PC-9 (cell line): ENCODE measurements at regions of chr15 and their contacts with region 1.

Region 1: DNA sequence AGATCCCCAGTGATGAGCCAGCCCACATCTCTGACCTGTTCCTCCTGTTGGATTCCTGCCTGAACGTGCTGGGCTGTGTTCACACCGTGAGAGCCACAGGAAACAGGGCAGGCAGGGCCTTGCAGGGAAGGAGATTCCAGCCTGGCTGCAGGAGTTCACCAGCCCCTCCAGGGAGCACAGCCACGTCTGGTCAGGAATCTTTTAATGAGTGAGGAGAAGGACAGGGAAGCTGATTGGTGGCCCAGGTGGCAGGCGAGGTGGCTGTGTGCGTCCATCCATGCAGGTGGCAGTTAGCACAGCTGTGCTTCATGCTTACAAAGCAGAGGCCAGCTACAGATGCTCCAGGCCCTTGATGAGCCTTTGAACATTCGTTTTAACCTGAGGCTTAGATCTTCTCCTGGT is 10.5 kb downstream of the LRRK1 start:
- DNase-seq: no peak
- H3K4me3 ChIP-seq: no peak overlapping the region
- H3K27ac ChIP-seq: no peak overlapping the region
- H3K4me1 ChIP-seq: 0 out of 2 replicates have a peak, but pooled peaks cover 13% of the 10 kb centered on the region
- H3K27me3 ChIP-seq: no peaks in the 10 kb centered on the region
- CTCF ChIP-seq: no peak

Region 2: DNA sequence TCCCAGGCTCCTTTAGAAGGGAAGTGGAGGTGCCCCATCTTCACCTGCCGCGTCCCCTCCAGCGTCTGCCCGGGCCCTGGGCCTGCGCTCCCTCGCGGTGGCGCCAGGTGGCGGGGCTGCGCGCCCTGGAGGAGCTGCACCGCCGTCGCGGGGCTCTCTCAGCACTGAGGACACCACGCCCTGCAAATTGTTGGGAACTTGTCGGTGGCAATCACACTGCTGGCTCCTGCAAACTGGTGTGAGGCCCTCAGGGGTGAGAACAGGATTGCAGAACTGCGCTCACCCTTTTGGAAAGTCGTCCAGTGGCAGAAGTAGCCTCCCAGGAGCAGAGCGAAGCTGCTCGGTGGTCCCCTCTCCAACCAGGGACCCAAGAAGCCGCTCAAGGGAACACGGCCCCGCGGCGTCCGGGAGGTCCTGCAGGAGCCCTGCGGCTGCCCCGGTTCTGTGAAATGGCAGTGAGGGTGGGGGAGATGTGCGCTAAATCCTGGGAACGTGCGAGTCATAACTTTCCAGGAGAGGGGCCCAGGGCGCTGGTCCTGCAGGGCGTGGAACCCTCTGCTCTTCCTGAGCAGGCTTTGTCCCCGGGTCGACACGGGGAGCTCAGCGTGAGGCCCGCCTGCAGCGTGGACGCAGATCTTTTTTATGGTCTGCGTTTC is 11.5 kb before region 1 on chr15:
- CTCF ChIA-PET with region 1: interaction called, 3 read pairs
- POLR2A ChIA-PET with region 1: no interaction called
- intact Hi-C with region 1: loop called (anchors 1 kb)
- DNase-seq: peak; percentile 80 to 89
- H3K4me3 ChIP-seq: peak overlapping the region; percentile 72
- H3K27ac ChIP-seq: no peak overlapping the region
- H3K4me1 ChIP-seq: no peaks in the 10 kb centered on the region
- H3K27me3 ChIP-seq: no peaks in the 10 kb centered on the region
- CTCF ChIP-seq: peak; percentile 85

Region 3: DNA sequence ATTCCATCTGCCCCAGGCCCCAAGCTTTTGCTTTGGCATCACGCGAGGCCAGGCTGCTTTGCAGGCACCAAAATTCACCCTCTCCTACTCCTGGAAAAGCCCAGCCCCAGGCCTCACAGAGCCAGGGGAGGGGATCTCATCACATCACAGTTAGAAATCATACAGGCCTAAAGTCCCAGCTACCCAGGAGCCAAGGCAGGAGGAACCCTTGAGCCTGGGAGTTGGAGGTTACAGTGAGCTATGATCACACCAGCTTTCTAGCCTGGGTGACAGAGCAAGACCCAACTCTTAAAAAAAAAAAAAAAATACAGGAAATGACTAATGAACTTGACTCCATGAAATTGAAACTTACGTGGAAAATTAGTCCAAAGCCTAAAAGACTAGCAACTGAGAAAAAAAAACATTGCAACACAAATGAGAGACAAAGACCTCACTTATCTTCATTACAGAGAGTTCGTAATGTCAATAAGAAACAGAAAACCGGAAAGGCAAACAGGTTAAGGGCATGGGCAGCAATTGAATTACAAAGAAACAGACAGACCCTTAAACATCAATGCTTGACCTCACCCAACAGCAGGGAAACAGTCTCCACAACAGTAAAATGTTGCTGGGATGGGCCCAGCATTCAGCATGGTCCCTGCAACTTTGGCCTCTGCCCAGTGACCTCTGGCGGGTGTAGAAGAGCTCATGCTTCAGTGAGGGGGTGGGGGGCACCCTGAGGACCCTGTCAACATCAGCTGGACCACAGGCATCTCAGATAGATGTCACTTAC is 141.0 kb after region 1 on chr15:
- CTCF ChIA-PET with region 1: interaction called, 10 read pairs
- POLR2A ChIA-PET with region 1: no interaction called
- intact Hi-C with region 1: no loop called
- DNase-seq: peak; percentile 14 to 87
- H3K4me3 ChIP-seq: no peak overlapping the region; the same call in 1 of the 2 replicates
- H3K27ac ChIP-seq: peak overlapping the region; percentile 83
- H3K4me1 ChIP-seq: peaks cover 38% of the 10 kb centered on the region
- H3K27me3 ChIP-seq: no peaks in the 10 kb centered on the region
- CTCF ChIP-seq: no peak